PC-3 (cell line): ENCODE measurements at regions of chr12 and their contacts with region 1.

Region 1: DNA sequence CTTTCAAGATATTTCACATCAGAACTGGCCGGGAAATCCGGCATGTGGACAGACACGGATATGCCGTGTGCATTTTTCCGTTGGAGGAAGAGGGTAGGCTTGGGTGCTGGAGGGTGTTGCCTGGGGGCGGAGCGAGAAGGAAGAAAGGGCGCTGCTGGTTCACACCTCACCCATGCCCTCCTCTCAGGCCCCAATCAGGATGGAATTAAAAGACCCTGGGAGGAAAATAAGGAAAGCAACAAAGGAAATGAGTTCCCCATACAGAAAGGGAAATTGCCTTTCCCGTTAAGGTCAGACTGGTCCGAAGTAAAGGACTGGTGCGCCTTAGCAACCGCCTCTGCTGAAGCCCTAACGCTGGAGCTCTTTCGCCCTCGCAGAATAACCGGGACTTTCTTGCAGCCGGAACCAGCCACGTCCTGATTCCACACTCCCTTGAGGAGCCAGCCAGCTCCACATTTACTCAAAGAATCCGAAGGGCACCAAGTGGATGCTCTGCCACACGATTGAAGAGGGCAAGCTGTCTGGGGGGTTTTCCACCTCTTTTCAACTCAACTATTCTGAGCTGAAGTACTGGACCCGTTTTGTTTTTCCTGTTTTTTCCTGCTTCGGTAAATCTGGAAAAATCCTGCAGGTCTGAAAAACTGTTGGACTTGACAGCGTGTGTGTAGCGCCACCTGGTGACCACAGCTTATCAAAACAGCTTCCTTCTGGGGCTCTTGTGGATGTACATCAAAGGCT is 37.7 kb upstream of the BCL2L14 start:
- DNase-seq: peak; percentile 87
- ATAC-seq: peak; percentile 79
- H3K4me3 ChIP-seq: peak overlapping the region; percentile 64
- H3K27ac ChIP-seq: peak overlapping the region; percentile 17; the same call in 1 of the 2 replicates
- H3K4me1 ChIP-seq: peaks cover 10% of the 10 kb centered on the region
- H3K27me3 ChIP-seq: no peaks in the 10 kb centered on the region
- CTCF ChIP-seq: peak; percentile 87

Region 2: GRCh38 chr12:11553871-11554533 is 479.0 kb before region 1 on chr12:
- CTCF ChIA-PET with region 1: interaction called, 3 read pairs
- POLR2A ChIA-PET with region 1: no interaction called
- intact Hi-C with region 1: loop called (anchors 1 kb)
- DNase-seq: peak; percentile 68
- ATAC-seq: peak; percentile 50
- H3K4me3 ChIP-seq: no peak overlapping the region
- H3K27ac ChIP-seq: no peak overlapping the region
- H3K4me1 ChIP-seq: no peaks in the 10 kb centered on the region
- H3K27me3 ChIP-seq: no peaks in the 10 kb centered on the region
- CTCF ChIP-seq: peak; percentile 59

Region 3: DNA sequence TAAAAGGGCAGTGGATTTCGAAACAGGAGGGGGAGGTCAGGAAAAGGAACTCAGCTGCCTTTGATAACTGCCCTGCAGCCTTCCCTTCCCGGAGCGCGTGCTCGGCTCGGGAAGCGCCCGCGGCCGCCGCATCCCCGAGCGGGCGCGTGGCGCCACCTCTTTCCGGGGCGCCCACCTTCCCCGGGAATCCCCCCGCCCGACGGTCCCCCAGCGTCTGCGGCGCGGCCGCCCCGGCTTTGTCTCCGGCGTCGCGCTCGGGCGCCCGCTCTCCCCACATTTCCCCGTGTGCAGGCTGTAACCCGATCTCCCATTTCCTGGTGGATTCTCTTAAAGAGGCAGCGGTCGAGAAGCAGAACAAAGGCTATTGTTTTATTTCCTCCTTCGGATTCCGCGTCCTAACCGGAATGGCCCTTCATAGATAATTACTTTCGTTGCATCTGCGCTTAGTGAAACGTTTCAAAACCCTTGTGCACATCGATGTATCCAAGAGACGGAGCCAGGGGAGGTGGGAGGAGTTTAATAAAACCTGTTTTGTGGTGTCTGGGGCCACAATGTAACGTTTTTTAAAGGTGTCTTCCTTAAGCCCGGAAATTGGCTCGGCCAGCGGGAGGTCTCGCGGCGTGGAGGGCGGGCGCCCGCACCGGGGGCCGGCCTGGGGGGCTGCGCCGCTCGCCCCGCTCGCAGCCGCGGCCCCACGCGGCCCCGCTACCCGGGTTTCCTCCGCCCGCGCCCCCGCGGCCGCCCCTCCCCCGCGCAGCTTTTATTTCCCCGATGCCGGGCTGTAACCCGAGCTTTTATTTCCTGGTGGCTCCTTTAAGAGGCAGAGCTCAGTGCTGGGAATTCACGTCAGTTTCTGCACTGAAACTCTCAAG is 384.0 kb before region 1 on chr12 and contains the start of gene ETV6:
- CTCF ChIA-PET with region 1: no interaction called
- POLR2A ChIA-PET with region 1: interaction called, 4 read pairs
- intact Hi-C with region 1: loop called (anchors 1 kb)
- DNase-seq: peak; percentile 80
- ATAC-seq: peak; percentile 70
- H3K4me3 ChIP-seq: peak within 1 kb of the TSS; percentile 95
- H3K27ac ChIP-seq: peak within 1 kb of the TSS; percentile 88
- H3K4me1 ChIP-seq: peaks cover 14% of the 10 kb centered on the region
- H3K27me3 ChIP-seq: no peaks in the 10 kb centered on the region
- CTCF ChIP-seq: no peak
- total RNA-seq, gene ETV6: 5.0 and 6.6 TPM in 2 replicates

Region 4: GRCh38 chr12:11798856-11799501 is 234.0 kb before region 1 on chr12:
- CTCF ChIA-PET with region 1: no interaction called
- POLR2A ChIA-PET with region 1: no interaction called
- intact Hi-C with region 1: loop called (anchors 5 kb)
- DNase-seq: peak; percentile 89
- ATAC-seq: peak; percentile 34
- H3K4me3 ChIP-seq: no peak overlapping the region
- H3K27ac ChIP-seq: peak overlapping the region; percentile 75
- H3K4me1 ChIP-seq: peaks cover 39% of the 10 kb centered on the region
- H3K27me3 ChIP-seq: no peaks in the 10 kb centered on the region
- CTCF ChIP-seq: no peak

Region 5: DNA sequence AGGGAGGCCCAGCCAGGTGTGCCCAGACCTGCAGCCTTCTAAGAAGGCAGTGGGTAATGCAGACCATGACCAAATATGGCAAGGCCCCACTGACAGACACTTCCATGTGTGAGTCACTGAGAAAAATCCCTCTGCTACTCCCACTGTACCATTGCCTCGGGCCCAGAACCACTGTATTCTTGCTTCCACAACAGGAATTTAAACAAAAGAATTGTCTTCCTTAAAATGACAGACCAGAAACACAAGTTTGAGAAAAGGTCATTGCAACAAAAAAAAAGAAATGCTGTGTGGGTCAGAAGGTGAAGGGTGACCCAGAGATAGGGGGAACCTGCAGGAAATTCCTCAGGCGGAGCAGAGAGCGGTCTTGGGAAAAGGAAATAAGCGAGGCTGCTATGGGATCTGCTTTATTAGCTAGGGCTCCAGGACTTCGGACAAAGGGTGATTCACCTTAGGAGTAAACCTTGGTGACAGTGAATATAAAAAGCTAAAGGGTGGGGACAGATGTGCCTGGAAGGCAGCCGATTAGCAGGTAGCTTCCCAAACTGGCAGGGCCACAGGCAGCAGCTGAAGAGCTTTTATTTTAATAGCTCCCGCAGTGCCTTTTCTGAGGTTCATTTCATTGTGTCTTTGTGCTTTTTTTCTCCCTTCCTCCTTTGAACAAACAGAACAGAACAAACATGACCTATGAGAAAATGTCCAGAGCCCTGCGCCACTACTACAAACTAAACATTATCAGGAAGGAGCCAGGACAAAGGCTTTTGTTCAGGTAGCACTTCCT is 147.6 kb before region 1 on chr12:
- CTCF ChIA-PET with region 1: interaction called, 3 read pairs
- POLR2A ChIA-PET with region 1: interaction called, 5 read pairs
- intact Hi-C with region 1: loop called (anchors 2 kb)
- DNase-seq: peak; percentile 85
- ATAC-seq: peak; percentile 78
- H3K4me3 ChIP-seq: peak overlapping the region; percentile 58
- H3K27ac ChIP-seq: peak overlapping the region; percentile 100
- H3K4me1 ChIP-seq: peaks cover 48% of the 10 kb centered on the region
- H3K27me3 ChIP-seq: no peaks in the 10 kb centered on the region
- CTCF ChIP-seq: no peak

Region 6: DNA sequence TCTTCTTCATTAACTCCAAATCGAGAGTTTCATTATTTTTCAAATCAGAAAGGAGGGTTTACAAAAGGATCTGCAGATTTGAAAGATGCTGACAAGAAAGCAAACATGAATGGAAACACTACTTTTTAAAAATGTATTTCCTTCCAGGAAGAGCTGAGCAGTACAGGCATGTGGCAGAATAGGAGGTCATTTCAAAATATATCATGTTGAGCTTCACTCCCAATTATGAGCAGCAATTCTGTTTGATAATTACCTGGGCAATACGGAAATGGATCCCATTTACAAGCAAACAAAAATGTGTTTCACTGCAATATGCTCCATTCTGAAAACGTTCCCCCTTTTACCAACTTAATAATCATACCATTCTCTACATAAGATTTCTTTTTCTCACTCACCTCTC is 110.0 kb before region 1 on chr12:
- CTCF ChIA-PET with region 1: no interaction called
- POLR2A ChIA-PET with region 1: no interaction called
- intact Hi-C with region 1: no loop called
- DNase-seq: no peak
- ATAC-seq: no peak
- H3K4me3 ChIP-seq: no peak overlapping the region
- H3K27ac ChIP-seq: no peak overlapping the region
- H3K4me1 ChIP-seq: no peaks in the 10 kb centered on the region
- H3K27me3 ChIP-seq: no peaks in the 10 kb centered on the region
- CTCF ChIP-seq: no peak